ENCODE measurements at regions of chr1 and their contacts with region 1.

Region 1: DNA sequence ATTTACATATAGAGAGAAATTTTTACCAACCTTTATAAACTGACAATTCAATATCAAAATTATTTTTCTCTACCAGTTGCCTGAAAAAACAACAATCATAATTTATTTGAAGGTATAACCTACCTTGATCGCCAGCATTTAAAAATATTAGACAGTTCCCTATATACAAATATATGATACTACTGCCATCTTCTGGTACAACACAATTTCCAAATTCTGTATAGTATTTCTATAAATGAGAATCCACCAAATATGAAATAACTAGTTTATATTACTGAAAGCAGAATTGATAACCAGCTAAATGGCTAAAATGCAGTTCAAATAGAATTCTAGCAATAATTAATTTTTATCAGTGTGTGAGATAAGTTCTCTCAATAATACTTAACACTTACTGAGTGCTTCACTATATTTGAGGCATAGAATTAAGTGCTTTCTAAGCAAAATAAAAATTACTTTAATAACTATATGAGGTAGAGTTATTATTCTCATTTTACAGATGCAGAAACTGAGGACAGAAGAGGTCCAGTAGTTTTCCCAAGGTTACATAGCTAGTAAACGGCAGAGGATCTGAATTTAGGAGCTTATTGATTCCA is 75.6 kb downstream of the PIGK start:
- DNase-seq: no peak
- H3K4me3 Mint-ChIP-seq: no peak overlapping the region
- H3K27ac Mint-ChIP-seq: no peak overlapping the region
- H3K4me1 Mint-ChIP-seq: peaks cover 2% of the 10 kb centered on the region
- H3K27me3 Mint-ChIP-seq: no peaks in the 10 kb centered on the region

Region 2: DNA sequence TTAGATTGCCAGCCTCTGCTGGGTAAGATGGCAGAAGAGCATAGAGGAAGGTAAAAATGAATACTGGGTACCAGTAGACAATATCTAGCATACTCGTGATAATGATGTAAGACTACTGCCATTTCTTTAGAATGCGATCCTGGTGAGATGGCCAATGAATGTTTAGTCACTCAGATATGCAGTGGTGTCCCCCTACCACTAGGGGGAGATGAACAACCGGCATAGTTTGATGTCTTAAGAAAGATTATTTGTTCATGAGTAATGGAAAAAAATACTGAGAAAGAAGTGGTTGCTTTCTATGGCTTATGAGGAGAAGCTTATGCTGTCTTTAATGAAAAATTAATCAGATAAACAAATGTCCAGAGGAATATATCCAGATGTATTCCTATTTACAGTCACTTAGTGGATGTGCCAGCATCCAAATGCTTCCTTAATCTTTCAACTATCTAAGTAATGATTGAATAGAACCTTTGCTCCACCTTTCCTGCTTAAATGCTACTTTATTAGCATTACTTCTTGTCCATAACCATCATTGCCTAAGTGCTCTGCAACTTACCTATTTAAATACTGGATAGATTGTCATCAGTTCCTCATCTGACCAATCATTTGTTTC is 812.5 kb before region 1 on chr1:
- CTCF ChIA-PET with region 1: no interaction called
- intact Hi-C with region 1: loop called (anchors 1 kb)
- DNase-seq: peak; percentile 68
- H3K4me3 Mint-ChIP-seq: no peak overlapping the region
- H3K27ac Mint-ChIP-seq: no peak overlapping the region
- H3K4me1 Mint-ChIP-seq: peaks cover 14% of the 10 kb centered on the region
- H3K27me3 Mint-ChIP-seq: no peaks in the 10 kb centered on the region

Region 3: DNA sequence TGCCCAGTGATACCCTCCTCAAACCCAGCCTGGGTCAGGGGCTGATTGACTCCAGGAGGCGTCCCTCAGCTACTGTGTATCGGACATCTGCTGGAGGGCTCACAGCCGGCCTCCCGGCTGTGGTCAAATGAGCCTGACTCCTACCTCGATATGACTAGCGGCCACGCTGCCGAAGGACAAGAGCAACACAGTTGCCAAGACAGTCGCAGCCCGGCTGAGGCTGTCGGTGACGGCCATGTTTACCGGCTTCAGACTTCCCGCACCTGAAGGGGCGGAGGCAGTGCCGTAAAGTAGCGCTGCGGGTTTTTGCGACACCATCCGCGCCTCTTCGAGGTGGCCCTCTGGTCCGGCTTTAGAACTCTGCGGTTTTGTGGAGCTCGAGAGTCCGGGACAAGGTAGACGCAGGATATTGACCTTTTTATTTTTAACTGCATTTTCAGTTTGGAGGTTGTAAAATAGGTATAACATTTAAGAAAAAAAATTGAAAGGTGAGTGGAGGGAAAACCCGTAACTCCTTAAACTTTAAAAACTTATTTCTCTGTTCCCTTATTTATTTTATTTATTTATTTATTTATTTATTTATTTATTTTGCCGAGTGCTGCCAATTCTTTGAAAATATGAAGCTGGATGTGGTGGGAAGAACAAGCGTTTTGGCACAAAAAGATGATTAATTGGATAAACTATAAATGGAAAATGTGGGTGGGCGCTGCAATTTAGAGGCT is 75.7 kb after region 1 on chr1 and contains the start of gene PIGK:
- CTCF ChIA-PET with region 1: no interaction called
- intact Hi-C with region 1: loop called (anchors 2 kb)
- DNase-seq: peak; percentile 95
- H3K4me3 Mint-ChIP-seq: peak within 1 kb of the TSS; percentile 93
- H3K27ac Mint-ChIP-seq: peak within 1 kb of the TSS; percentile 94
- H3K4me1 Mint-ChIP-seq: peaks cover 37% of the 10 kb centered on the region
- H3K27me3 Mint-ChIP-seq: no peaks in the 10 kb centered on the region
- total RNA-seq, gene PIGK: 27.3 to 30.8 TPM

Region 4: GRCh38 chr1:77413541-77414335 is 270.1 kb after region 1 on chr1:
- CTCF ChIA-PET with region 1: no interaction called
- intact Hi-C with region 1: loop called (anchors 2 kb)
- DNase-seq: no peak
- H3K4me3 Mint-ChIP-seq: peak overlapping the region; percentile 19
- H3K27ac Mint-ChIP-seq: no peak overlapping the region
- H3K4me1 Mint-ChIP-seq: peaks cover 24% of the 10 kb centered on the region
- H3K27me3 Mint-ChIP-seq: no peaks in the 10 kb centered on the region

Region 5: DNA sequence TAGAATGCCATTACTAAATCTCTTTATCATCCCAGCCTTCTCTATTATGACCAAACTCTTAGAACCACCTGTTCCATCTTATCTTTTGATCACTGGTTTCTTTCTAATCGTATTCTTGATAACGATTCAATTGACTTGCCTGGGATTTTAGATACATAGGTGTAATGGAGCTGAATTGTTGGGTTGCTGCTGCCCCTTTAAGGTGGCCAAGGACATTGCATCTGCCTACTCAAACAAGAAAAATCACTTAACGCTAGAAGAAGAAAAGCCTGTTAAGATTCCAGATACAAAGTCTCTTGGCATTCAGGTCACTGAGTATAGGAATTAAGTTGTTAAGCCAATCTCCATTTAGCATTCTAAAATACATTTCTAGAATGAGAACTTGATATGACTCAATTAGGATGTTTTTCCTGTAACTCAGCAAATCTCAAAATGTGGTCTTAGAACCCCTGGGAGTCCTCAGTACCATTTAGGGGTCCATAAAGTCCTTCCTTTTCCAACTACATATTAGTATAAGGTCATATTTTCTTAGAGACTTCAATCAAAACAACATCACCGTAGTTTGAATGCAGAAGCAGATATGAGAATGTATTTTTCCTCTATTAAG is 757.2 kb after region 1 on chr1:
- CTCF ChIA-PET with region 1: no interaction called
- intact Hi-C with region 1: loop called (anchors 2 kb)
- DNase-seq: peak; percentile 40
- H3K4me3 Mint-ChIP-seq: no peak overlapping the region
- H3K27ac Mint-ChIP-seq: no peak overlapping the region
- H3K4me1 Mint-ChIP-seq: no peaks in the 10 kb centered on the region
- H3K27me3 Mint-ChIP-seq: peaks cover 2% of the 10 kb centered on the region